ENCODE measurements at regions of chr7 and their contacts with region 1.

Region 1: GRCh38 chr7:137169282-137169698 is 174.2 kb downstream of the PTN start:
- DNase-seq: peak; percentile 47 to 65
- H3K4me3 ChIP-seq: no peak overlapping the region
- H3K27ac ChIP-seq: no peak overlapping the region
- H3K4me1 ChIP-seq: no peaks in the 10 kb centered on the region
- H3K27me3 ChIP-seq: no peaks in the 10 kb centered on the region
- CTCF ChIP-seq: peak; percentile 89 to 98 (median 90)
- EP300 ChIP-seq: no peak
- POLR2A ChIP-seq: no peak
- RAD21 ChIP-seq: peak; percentile 99 to 100

Region 2: DNA sequence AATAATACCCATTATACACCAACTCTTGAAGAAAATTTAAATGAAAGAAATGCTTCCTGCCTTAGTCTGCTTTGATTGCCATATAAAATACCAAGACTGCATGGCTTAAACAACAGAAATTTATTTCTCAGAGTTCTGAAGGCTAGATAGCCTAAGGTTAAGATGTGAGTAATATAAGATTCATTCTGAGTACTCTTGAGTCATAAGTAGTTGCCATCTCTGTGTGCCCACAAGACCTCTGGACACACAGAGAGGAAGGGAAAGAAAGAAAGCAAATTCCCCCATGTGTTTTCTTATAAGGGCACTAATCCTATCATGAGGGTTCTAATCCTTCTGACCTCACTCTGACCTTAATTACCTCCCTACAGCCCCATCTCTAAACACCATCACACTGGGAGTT is 26.9 kb before region 1 on chr7:
- CTCF ChIA-PET with region 1: no interaction called
- POLR2A ChIA-PET with region 1: no interaction called
- DNase-seq: no peak
- H3K4me3 ChIP-seq: no peak overlapping the region
- H3K27ac ChIP-seq: no peak overlapping the region
- H3K4me1 ChIP-seq: no peaks in the 10 kb centered on the region
- H3K27me3 ChIP-seq: no peaks in the 10 kb centered on the region
- CTCF ChIP-seq: no peak
- EP300 ChIP-seq: no peak
- POLR2A ChIP-seq: no peak
- RAD21 ChIP-seq: no peak

Region 3: DNA sequence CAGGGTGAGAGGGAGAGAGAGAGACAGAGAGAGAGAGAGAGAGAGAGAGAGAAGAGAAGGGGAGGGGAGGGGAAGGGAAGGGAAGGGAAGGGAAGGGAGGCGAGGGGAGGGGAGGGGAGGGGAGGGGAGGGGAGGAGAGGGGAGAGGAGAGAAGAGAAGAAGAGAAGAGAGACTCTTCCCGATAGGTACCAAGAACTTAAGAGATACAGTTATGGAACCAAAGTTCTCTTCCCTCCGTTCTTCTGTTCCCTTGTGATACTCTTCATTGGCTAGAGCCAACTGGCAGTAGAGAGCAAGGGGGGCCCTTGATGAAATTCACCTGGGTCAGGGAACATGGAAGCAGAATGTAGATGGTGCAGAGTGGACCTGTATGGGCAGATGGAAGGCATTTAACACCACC is 52.2 kb after region 1 on chr7:
- CTCF ChIA-PET with region 1: no interaction called
- POLR2A ChIA-PET with region 1: no interaction called
- DNase-seq: no peak
- H3K4me3 ChIP-seq: no peak overlapping the region
- H3K27ac ChIP-seq: no peak overlapping the region
- H3K4me1 ChIP-seq: no peaks in the 10 kb centered on the region; a peak in 1 of 7 replicates
- H3K27me3 ChIP-seq: no peaks in the 10 kb centered on the region
- CTCF ChIP-seq: no peak
- EP300 ChIP-seq: no peak
- POLR2A ChIP-seq: no peak
- RAD21 ChIP-seq: no peak

Region 4: GRCh38 chr7:137337902-137338301 is 168.6 kb after region 1 on chr7:
- CTCF ChIA-PET with region 1: interaction called, 20 read pairs
- POLR2A ChIA-PET with region 1: no interaction called
- DNase-seq: no peak
- H3K4me3 ChIP-seq: no peak overlapping the region
- H3K27ac ChIP-seq: no peak overlapping the region
- H3K4me1 ChIP-seq: peaks cover 0 to 6% (median 3%) of the 10 kb centered on the region in 4 experiments; a peak in 4 of 7 replicates
- H3K27me3 ChIP-seq: no peaks in the 10 kb centered on the region; a peak in 1 of 7 replicates
- CTCF ChIP-seq: peak in 2 of 3 experiments; percentile 60 to 71; a peak in 3 of 4 replicates
- EP300 ChIP-seq: no peak
- POLR2A ChIP-seq: no peak
- RAD21 ChIP-seq: peak; percentile 79 to 85

Region 5: GRCh38 chr7:137454246-137454724 is 285.0 kb after region 1 on chr7:
- CTCF ChIA-PET with region 1: interaction called, 10 read pairs
- POLR2A ChIA-PET with region 1: no interaction called
- DNase-seq: no peak
- H3K4me3 ChIP-seq: no peak overlapping the region
- H3K27ac ChIP-seq: no peak overlapping the region
- H3K4me1 ChIP-seq: no peaks in the 10 kb centered on the region
- H3K27me3 ChIP-seq: no peaks in the 10 kb centered on the region
- CTCF ChIP-seq: peak in 2 of 3 experiments; percentile 39 to 52; a peak in 2 of 4 replicates
- EP300 ChIP-seq: no peak
- POLR2A ChIP-seq: no peak
- RAD21 ChIP-seq: peak; percentile 74 to 78